HCT116 (cell line): ENCODE measurements at regions of chrX and their contacts with region 1.

Region 1: GRCh38 chrX:74291964-74292807 is 11.8 kb upstream of the ZCCHC13 start:
- DNase-seq: peak; percentile 79
- ATAC-seq: peak; percentile 88
- H3K4me3 ChIP-seq: peak overlapping the region; percentile 65 to 77
- H3K27ac ChIP-seq: peak overlapping the region; percentile 86
- H3K4me1 ChIP-seq: peaks cover 0 to 10% of the 10 kb centered on the region in 2 experiments; a peak in 2 of 4 replicates
- H3K27me3 ChIP-seq: no peaks in the 10 kb centered on the region
- CTCF ChIP-seq: 0 out of 6 replicates have a peak, but pooled peaks of 2 of the 3 experiments have one; percentile 7 to 16
- POLR2A ChIP-seq: peak; percentile 35
- RAD21 ChIP-seq: no peak

Region 2: DNA sequence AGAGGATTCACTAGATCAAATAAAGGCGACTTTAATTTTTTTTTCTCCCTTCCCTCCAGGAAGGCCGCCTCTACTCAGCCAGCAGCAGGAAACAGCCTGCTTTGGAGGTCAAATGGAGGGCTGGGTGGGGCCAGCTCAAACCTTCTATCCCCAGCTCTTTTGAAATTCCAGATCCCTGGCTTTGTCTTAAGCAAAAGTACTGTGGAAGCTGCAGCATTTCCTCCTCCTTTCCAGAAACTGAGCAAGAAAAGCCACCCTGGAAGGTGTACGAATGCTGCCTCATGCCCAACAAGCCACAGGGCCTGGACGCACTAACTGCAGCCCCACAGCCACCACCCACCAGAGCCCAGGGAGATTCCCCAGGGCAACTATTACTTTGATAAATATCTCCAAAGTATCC is 43.3 kb before region 1 on chrX:
- CTCF ChIA-PET with region 1: no interaction called
- POLR2A ChIA-PET with region 1: interaction called, 3 read pairs
- RAD21 ChIA-PET with region 1: no interaction called
- intact Hi-C with region 1: loop called (anchors 5 kb)
- DNase-seq: no peak
- ATAC-seq: peak; percentile 67
- H3K4me3 ChIP-seq: no peak overlapping the region
- H3K27ac ChIP-seq: peak overlapping the region; percentile 67
- H3K4me1 ChIP-seq: peaks cover 30 to 54% of the 10 kb centered on the region in 2 experiments
- H3K27me3 ChIP-seq: no peaks in the 10 kb centered on the region
- CTCF ChIP-seq: no peak
- POLR2A ChIP-seq: no peak
- RAD21 ChIP-seq: no peak